Activated CD4-positive, alpha-beta memory T cell treated with anti-CD3 and anti-CD28 coated beads, Interleukin-2, amount 10 ng/mL, durations not matched to agents 7 days and 5 days (primary cell): ENCODE measurements at regions of chr1 and their contacts with region 1.

Region 1: DNA sequence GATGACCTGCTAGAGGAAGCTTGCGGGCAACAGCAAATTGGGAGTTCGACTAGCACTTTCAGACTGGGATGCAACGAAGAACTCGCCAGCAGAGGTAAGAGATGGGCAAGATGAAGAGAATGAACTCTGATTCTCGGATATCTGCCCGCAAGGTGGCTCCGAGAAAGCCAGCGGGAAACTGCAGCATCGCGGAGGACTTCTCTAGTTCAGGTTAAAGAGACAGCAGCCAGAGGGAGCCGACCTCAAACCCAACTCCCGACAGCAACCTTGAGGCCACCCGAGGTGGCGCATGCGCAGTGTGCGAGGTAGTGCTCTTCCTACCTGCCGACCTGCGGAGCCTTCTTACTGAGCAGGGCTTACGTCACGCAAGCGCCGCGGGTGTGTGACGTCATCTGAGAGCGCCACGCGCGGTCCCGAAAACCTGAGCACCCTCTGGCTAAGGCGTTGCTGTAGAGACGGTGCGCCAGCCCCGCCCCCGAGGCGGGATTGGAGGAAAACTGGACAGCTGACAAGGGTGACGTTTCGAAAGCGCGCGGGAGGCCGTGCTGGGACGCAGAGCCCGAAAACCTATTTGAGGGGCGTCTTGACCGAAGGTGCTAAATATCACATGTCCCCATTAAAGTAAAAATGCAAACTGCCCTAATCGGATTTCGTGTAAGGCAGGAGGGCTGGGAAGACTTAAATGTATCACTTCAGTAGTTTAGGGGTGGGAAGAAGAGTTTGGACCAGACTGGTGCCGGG is 110.5 kb upstream of the SLC25A33 start:
- DNase-seq: peak; percentile 100
- H3K4me3 Mint-ChIP-seq: peak overlapping the region; percentile 93
- H3K27ac Mint-ChIP-seq: peak overlapping the region; percentile 85
- H3K4me1 Mint-ChIP-seq: peaks cover 51% of the 10 kb centered on the region
- H3K27me3 Mint-ChIP-seq: peaks cover 15% of the 10 kb centered on the region

Region 2: GRCh38 chr1:9275567-9276034 is 153.2 kb before region 1 on chr1:
- CTCF ChIA-PET with region 1: no interaction called
- POLR2A ChIA-PET with region 1: interaction called, 10 read pairs
- DNase-seq: peak; percentile 90
- H3K4me3 Mint-ChIP-seq: peak overlapping the region; percentile 43
- H3K27ac Mint-ChIP-seq: peak overlapping the region; percentile 82
- H3K4me1 Mint-ChIP-seq: peaks cover 40% of the 10 kb centered on the region
- H3K27me3 Mint-ChIP-seq: peaks cover 9% of the 10 kb centered on the region

Region 3: GRCh38 chr1:9413148-9413876 is 15.5 kb before region 1 on chr1:
- CTCF ChIA-PET with region 1: interaction called, 6 read pairs
- POLR2A ChIA-PET with region 1: interaction called, 30 read pairs
- DNase-seq: peak; percentile 66
- H3K4me3 Mint-ChIP-seq: peak overlapping the region; percentile 7
- H3K27ac Mint-ChIP-seq: no peak overlapping the region
- H3K4me1 Mint-ChIP-seq: peaks cover 51% of the 10 kb centered on the region
- H3K27me3 Mint-ChIP-seq: peaks cover 18% of the 10 kb centered on the region

Region 4: GRCh38 chr1:9867408-9868243 is 438.9 kb after region 1 on chr1:
- CTCF ChIA-PET with region 1: no interaction called
- POLR2A ChIA-PET with region 1: no interaction called
- DNase-seq: peak; percentile 90
- H3K4me3 Mint-ChIP-seq: no peak overlapping the region
- H3K27ac Mint-ChIP-seq: no peak overlapping the region
- H3K4me1 Mint-ChIP-seq: no peaks in the 10 kb centered on the region
- H3K27me3 Mint-ChIP-seq: no peaks in the 10 kb centered on the region